HepG2 (cell line): ENCODE measurements at regions of chrX and their contacts with region 1.

Region 1: DNA sequence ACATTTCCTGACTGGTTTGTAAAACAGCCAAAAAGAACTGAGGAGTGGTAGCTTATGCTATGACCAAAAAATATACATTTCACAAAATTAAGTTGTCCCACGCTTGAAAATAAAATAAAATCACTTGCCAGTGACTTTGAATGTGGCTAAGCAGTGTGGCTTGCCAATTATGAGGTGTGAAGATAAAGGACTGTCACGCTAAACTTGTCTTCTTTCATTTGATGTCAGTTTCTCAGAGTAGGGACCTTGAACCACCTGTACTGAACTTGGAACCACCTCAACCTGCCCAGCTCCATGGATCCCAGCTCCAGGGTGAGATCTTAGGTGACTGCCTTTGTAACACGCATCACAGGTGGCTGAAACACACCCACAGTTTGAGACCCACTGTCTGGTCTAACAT is 113.7 kb upstream of the TBL1X start:
- DNase-seq: no peak
- ATAC-seq: no peak
- H3K4me3 ChIP-seq: no peak overlapping the region
- H3K27ac ChIP-seq: no peak overlapping the region
- H3K4me1 ChIP-seq: peaks cover 37% of the 10 kb centered on the region
- H3K27me3 ChIP-seq: peaks cover 0 to 3% of the 10 kb centered on the region in 2 experiments; a peak in 1 of 5 replicates
- CTCF ChIP-seq: no peak
- EP300 ChIP-seq: no peak
- POLR2A ChIP-seq: no peak
- RAD21 ChIP-seq: no peak

Region 2: GRCh38 chrX:9302381-9302780 is 48.7 kb before region 1 on chrX:
- CTCF ChIA-PET with region 1: no interaction called
- POLR2A ChIA-PET with region 1: no interaction called
- in situ Hi-C with region 1: no loop called
- intact Hi-C with region 1: no loop called
- DNase-seq: no peak
- ATAC-seq: no peak
- H3K4me3 ChIP-seq: no peak overlapping the region
- H3K27ac ChIP-seq: no peak overlapping the region
- H3K4me1 ChIP-seq: no peaks in the 10 kb centered on the region
- H3K27me3 ChIP-seq: no peaks in the 10 kb centered on the region; a peak in 1 of 5 replicates
- CTCF ChIP-seq: no peak
- EP300 ChIP-seq: no peak
- POLR2A ChIP-seq: no peak
- RAD21 ChIP-seq: no peak

Region 3: GRCh38 chrX:9312922-9313867 is 37.9 kb before region 1 on chrX:
- CTCF ChIA-PET with region 1: no interaction called
- POLR2A ChIA-PET with region 1: no interaction called
- in situ Hi-C with region 1: no loop called
- intact Hi-C with region 1: loop called (anchors 1 kb)
- DNase-seq: peak; percentile 13
- ATAC-seq: peak; percentile 74
- H3K4me3 ChIP-seq: no peak overlapping the region
- H3K27ac ChIP-seq: no peak overlapping the region
- H3K4me1 ChIP-seq: no peaks in the 10 kb centered on the region
- H3K27me3 ChIP-seq: no peaks in the 10 kb centered on the region
- CTCF ChIP-seq: peak; percentile 63
- EP300 ChIP-seq: no peak
- POLR2A ChIP-seq: no peak
- RAD21 ChIP-seq: no peak